Endothelial cell of umbilical vein (primary cell): ENCODE measurements at regions of chr19 and their contacts with region 1.

Region 1: DNA sequence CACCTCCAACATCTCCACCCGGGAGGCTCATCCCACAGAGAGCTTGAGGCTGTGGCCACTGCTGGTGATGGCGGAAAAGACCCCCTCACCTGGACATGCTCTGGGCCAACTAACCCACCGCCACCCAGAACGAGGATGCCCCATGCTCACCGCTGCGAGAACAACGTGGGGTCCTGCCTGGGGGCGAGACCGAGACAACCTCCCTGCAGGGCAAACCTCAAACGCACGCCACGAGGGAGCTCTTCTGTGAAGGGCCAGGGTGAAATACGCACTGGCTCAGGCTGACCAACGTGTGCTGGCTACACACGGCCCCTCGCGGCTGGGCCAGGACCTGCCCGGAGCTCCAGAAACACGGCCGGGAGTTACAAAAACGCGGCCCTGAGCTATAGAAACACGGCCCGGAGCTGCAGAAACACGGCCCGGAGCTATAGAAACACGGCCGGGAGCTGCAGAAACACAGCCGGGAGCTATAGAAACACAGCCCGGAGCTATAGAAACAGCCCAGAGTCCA is 19.0 kb upstream of the PLPP2 start:
- DNase-seq: peak; percentile 85
- H3K4me3 ChIP-seq: peak overlapping the region; percentile 0 to 26 (median 5)
- H3K27ac ChIP-seq: peak overlapping the region; percentile 10
- H3K4me1 ChIP-seq: peaks cover 23% of the 10 kb centered on the region
- H3K27me3 ChIP-seq: no peaks in the 10 kb centered on the region
- CTCF ChIP-seq: peak in 1 of 2 donors; percentile 30
- POLR2A ChIP-seq: no peak

Region 2: GRCh38 chr19:328025-328505 is 17.9 kb after region 1 on chr19:
- CTCF ChIA-PET with region 1: no interaction called
- POLR2A ChIA-PET with region 1: no interaction called
- dilution Hi-C with region 1: no loop called
- intact Hi-C with region 1: no loop called
- DNase-seq: no peak
- H3K4me3 ChIP-seq: no peak overlapping the region
- H3K27ac ChIP-seq: no peak overlapping the region
- H3K4me1 ChIP-seq: no peaks in the 10 kb centered on the region
- H3K27me3 ChIP-seq: no peaks in the 10 kb centered on the region
- CTCF ChIP-seq: no peak
- POLR2A ChIP-seq: no peak

Region 3: GRCh38 chr19:480016-480855 is 170.0 kb after region 1 on chr19:
- CTCF ChIA-PET with region 1: interaction called, 10 read pairs
- POLR2A ChIA-PET with region 1: no interaction called
- dilution Hi-C with region 1: no loop called
- intact Hi-C with region 1: no loop called
- DNase-seq: peak; percentile 55
- H3K4me3 ChIP-seq: no peak overlapping the region
- H3K27ac ChIP-seq: no peak overlapping the region
- H3K4me1 ChIP-seq: no peaks in the 10 kb centered on the region
- H3K27me3 ChIP-seq: no peaks in the 10 kb centered on the region
- CTCF ChIP-seq: peak; percentile 35 to 62
- POLR2A ChIP-seq: no peak